MCF 10A (cell line): ENCODE measurements at regions of chr12 and their contacts with region 1.

Region 1: GRCh38 chr12:56468216-56469006 is at the start of gene SPRYD4:
- DNase-seq: peak; percentile 93
- H3K4me3 Mint-ChIP-seq: peak within 1 kb of the TSS; percentile 97
- H3K27ac Mint-ChIP-seq: peak within 1 kb of the TSS; percentile 96
- H3K4me1 Mint-ChIP-seq: peaks cover 14% of the 10 kb centered on the region
- H3K27me3 Mint-ChIP-seq: no peaks in the 10 kb centered on the region
- CTCF ChIP-seq: peak; percentile 23
- total RNA-seq, gene SPRYD4: 3.5 and 3.9 TPM in 2 replicates

Region 2: GRCh38 chr12:56105609-56105902 is 362.9 kb before region 1 on chr12:
- CTCF ChIA-PET with region 1: no interaction called
- POLR2A ChIA-PET with region 1: no interaction called
- intact Hi-C with region 1: no loop called
- DNase-seq: no peak
- H3K4me3 Mint-ChIP-seq: peak overlapping the region; percentile 97
- H3K27ac Mint-ChIP-seq: peak overlapping the region; percentile 95
- H3K4me1 Mint-ChIP-seq: peaks cover 11% of the 10 kb centered on the region
- H3K27me3 Mint-ChIP-seq: no peaks in the 10 kb centered on the region
- CTCF ChIP-seq: no peak

Region 3: GRCh38 chr12:56189176-56189917 is 279.1 kb before region 1 on chr12 and contains the start of gene SMARCC2:
- CTCF ChIA-PET with region 1: interaction called, 4 read pairs
- POLR2A ChIA-PET with region 1: interaction called, 4 read pairs
- intact Hi-C with region 1: loop called (anchors 1 kb)
- DNase-seq: peak; percentile 87
- H3K4me3 Mint-ChIP-seq: peak within 1 kb of the TSS; percentile 85
- H3K27ac Mint-ChIP-seq: peak within 1 kb of the TSS; percentile 93
- H3K4me1 Mint-ChIP-seq: peaks cover 38% of the 10 kb centered on the region
- H3K27me3 Mint-ChIP-seq: no peaks in the 10 kb centered on the region
- CTCF ChIP-seq: peak; percentile 75
- total RNA-seq, gene SMARCC2: 52.1 and 57.0 TPM in 2 replicates

Region 4: DNA sequence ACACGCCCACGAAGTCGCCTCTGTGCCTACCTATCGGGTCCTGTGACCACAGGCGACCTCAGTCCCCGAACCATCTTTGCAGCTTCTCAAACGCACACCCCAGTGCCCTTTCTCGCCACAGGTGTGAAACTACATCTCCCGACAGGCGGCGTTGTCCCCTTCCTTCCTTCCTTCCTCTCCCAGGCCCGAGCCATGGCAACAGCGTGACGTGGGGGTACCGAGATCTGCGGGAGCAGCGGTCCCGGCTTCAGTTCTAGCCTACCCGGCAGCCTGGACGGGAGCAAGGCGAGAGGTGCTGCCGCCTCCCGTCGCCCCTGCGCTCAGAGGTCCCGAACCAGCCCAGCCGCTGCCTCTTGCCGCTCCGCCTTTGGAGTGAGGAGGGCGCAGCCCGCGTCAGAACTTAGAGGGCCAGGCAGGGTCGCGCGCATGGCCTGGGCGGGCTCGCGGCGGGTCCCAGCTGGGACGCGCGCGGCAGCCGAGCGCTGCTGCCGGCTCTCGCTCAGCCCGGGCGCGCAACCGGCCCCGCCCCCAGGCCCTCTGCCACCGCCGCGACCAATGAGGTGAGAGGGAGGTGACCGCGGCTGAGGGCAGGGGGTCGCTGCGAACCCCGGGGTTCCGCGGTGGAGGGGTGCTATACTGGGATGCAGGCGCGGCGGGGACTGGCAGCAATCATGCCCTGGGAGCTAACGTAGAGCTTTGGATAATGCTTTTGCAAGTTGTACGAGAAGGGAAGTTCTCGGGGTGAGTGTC is 201.5 kb before region 1 on chr12 and contains the start of gene COQ10A:
- CTCF ChIA-PET with region 1: interaction called, 5 read pairs
- POLR2A ChIA-PET with region 1: interaction called, 4 read pairs
- intact Hi-C with region 1: loop called (anchors 1 kb)
- DNase-seq: peak; percentile 84
- H3K4me3 Mint-ChIP-seq: peak within 1 kb of the TSS; percentile 89
- H3K27ac Mint-ChIP-seq: peak within 1 kb of the TSS; percentile 51
- H3K4me1 Mint-ChIP-seq: peaks cover 9% of the 10 kb centered on the region
- H3K27me3 Mint-ChIP-seq: no peaks in the 10 kb centered on the region
- CTCF ChIP-seq: peak; percentile 62
- total RNA-seq, gene COQ10A: 3.6 and 3.8 TPM in 2 replicates

Region 5: GRCh38 chr12:56333679-56334489 is 134.5 kb before region 1 on chr12 and contains the start of gene PAN2:
- CTCF ChIA-PET with region 1: interaction called, 9 read pairs
- POLR2A ChIA-PET with region 1: interaction called, 21 read pairs
- intact Hi-C with region 1: no loop called
- DNase-seq: peak; percentile 99
- H3K4me3 Mint-ChIP-seq: peak within 1 kb of the TSS; percentile 83
- H3K27ac Mint-ChIP-seq: peak within 1 kb of the TSS; percentile 98
- H3K4me1 Mint-ChIP-seq: peaks cover 21% of the 10 kb centered on the region
- H3K27me3 Mint-ChIP-seq: no peaks in the 10 kb centered on the region
- CTCF ChIP-seq: peak; percentile 60
- total RNA-seq, gene PAN2: 72.9 and 80.1 TPM in 2 replicates

Region 6: GRCh38 chr12:56377310-56377988 is 91.0 kb before region 1 on chr12:
- CTCF ChIA-PET with region 1: interaction called, 4 read pairs
- POLR2A ChIA-PET with region 1: no interaction called
- intact Hi-C with region 1: loop called (anchors 1 kb)
- DNase-seq: peak; percentile 35
- H3K4me3 Mint-ChIP-seq: no peak overlapping the region
- H3K27ac Mint-ChIP-seq: no peak overlapping the region
- H3K4me1 Mint-ChIP-seq: no peaks in the 10 kb centered on the region
- H3K27me3 Mint-ChIP-seq: no peaks in the 10 kb centered on the region
- CTCF ChIP-seq: peak; percentile 31

Region 7: DNA sequence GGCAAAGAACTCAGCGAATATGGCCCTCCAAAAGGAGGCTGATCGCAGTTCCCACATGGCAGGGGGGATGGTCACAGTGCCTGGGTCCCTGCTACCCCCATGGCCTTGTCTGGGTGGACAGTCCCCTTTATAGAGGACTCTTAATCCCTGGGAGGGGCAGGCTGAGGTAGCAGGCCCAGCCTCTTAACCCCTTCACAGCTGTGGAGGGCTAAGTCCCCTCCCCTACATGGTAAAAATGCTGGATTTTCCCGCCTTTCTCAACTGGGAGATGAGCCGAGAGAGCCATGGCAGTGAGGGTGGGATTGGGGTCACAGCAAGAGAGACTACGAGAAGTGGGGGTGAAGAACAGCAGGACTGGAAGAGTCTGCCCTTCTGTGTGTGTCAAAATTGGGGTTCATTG is 13.9 kb before region 1 on chr12 and contains the start of gene MIP:
- CTCF ChIA-PET with region 1: interaction called, 20 read pairs
- POLR2A ChIA-PET with region 1: interaction called, 43 read pairs
- intact Hi-C with region 1: no loop called
- DNase-seq: no peak
- H3K4me3 Mint-ChIP-seq: no peak within 1 kb of the TSS
- H3K27ac Mint-ChIP-seq: no peak within 1 kb of the TSS
- H3K4me1 Mint-ChIP-seq: peaks cover 4% of the 10 kb centered on the region
- H3K27me3 Mint-ChIP-seq: no peaks in the 10 kb centered on the region
- CTCF ChIP-seq: no peak
- total RNA-seq, gene MIP: not detected in 2 replicates

Region 8: DNA sequence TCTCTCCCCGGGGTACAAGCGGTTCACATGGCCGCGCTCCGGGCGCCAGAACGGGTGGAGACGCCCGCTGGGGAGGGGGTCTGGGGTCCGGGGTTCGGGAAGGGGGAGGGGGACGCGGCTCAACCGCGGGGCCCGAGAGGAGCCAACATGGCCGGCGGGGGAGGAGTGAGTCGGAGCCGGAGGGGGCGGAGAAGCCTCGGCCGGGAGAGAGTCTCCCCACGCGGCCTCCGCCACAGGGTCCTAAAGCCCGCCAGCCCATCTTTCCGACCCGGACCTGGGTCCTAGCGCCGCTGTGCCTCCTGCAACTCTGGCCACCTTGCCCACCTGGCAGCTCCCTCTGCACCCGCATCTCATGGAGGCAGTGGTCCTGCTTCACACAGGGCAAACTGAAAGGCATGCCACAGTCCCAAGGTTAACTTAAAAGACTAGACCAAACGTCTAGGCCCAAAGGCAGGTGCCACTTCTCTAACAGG is 161.8 kb after region 1 on chr12 and contains the start of gene BAZ2A:
- CTCF ChIA-PET with region 1: interaction called, 3 read pairs
- POLR2A ChIA-PET with region 1: interaction called, 13 read pairs
- intact Hi-C with region 1: no loop called
- DNase-seq: peak; percentile 83
- H3K4me3 Mint-ChIP-seq: peak within 1 kb of the TSS; percentile 71
- H3K27ac Mint-ChIP-seq: peak within 1 kb of the TSS; percentile 11
- H3K4me1 Mint-ChIP-seq: peaks cover 38% of the 10 kb centered on the region
- H3K27me3 Mint-ChIP-seq: no peaks in the 10 kb centered on the region
- CTCF ChIP-seq: no peak
- total RNA-seq, gene BAZ2A: 87.3 and 101 TPM in 2 replicates